Gastrocnemius medialis (tissue), 4 donors: ENCODE measurements at regions of chr11 and their contacts with region 1.

Region 1: DNA sequence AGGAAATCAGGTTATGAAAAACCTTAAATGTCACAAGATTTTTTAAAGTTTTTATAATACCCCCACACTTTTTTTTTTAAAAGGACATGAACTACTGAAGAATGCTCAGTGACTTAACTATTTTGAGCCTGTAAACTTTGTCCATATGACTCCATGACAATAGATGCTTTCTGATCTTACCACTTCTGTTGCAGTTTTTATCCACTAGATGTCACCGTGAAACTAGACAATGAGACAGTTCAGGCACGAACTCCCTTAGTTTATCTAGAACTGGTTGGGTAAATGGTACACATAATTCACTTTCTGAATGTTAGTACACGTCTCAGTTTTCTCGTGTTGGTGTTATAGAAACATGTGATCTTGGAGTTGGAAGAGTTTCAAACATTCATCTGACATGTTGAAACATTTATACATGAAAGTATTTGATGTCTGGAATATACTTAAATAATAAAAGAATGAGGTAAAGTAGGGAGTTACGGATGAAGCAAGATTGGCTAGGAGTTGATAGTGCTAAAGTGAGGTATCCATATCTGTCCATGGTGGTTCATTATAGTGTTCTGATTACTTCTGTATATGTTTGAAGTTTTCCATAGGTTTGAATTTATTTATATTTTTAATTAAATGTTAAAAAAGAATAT is 8.1 kb downstream of the CCDC15 start:
- DNase-seq: no peak
- ATAC-seq: peak; percentile 75 to 90
- H3K4me3 ChIP-seq: no peak overlapping the region
- H3K27ac ChIP-seq: no peak overlapping the region
- H3K4me1 ChIP-seq: no peaks in the 10 kb centered on the region
- H3K27me3 ChIP-seq: no peaks in the 10 kb centered on the region
- CTCF ChIP-seq: peak in 4 of 5 experiments; percentile 58 to 71 (median 60)
- POLR2A ChIP-seq: no peak

Region 2: GRCh38 chr11:124837491-124837856 is 124.6 kb before region 1 on chr11:
- in situ Hi-C with region 1: no loop called
- intact Hi-C with region 1: no loop called
- DNase-seq: no peak
- ATAC-seq: peak in 1 of 2 donors; percentile 52
- H3K4me3 ChIP-seq: no peak overlapping the region
- H3K27ac ChIP-seq: no peak overlapping the region
- H3K4me1 ChIP-seq: peaks cover 9 to 16% of the 10 kb centered on the region in 2 donors
- H3K27me3 ChIP-seq: peaks cover 44 to 49% (median 44%) of the 10 kb centered on the region in 3 donors
- CTCF ChIP-seq: no peak
- POLR2A ChIP-seq: no peak

Region 3: GRCh38 chr11:124946735-124947141 is 15.4 kb before region 1 on chr11:
- in situ Hi-C with region 1: no loop called
- intact Hi-C with region 1: no loop called
- DNase-seq: no peak
- ATAC-seq: no peak
- H3K4me3 ChIP-seq: no peak overlapping the region
- H3K27ac ChIP-seq: no peak overlapping the region
- H3K4me1 ChIP-seq: no peaks in the 10 kb centered on the region
- H3K27me3 ChIP-seq: no peaks in the 10 kb centered on the region
- CTCF ChIP-seq: no peak
- POLR2A ChIP-seq: no peak

Region 4: GRCh38 chr11:125141686-125142535 is 179.8 kb after region 1 on chr11:
- in situ Hi-C with region 1: loop called in 3 of 4 experiments (anchors 10 to 25 kb)
- intact Hi-C with region 1: loop called (anchors 2 kb)
- DNase-seq: no peak
- ATAC-seq: peak; percentile 9 to 83
- H3K4me3 ChIP-seq: no peak overlapping the region
- H3K27ac ChIP-seq: no peak overlapping the region
- H3K4me1 ChIP-seq: peaks cover 0 to 4% of the 10 kb centered on the region in 2 donors
- H3K27me3 ChIP-seq: peaks cover 0 to 8% (median 6%) of the 10 kb centered on the region in 3 donors
- CTCF ChIP-seq: peak; percentile 84 to 95 (median 88)
- POLR2A ChIP-seq: no peak

Region 5: GRCh38 chr11:125224391-125225010 is 262.4 kb after region 1 on chr11:
- in situ Hi-C with region 1: no loop called
- intact Hi-C with region 1: no loop called
- DNase-seq: no peak
- ATAC-seq: no peak
- H3K4me3 ChIP-seq: no peak overlapping the region
- H3K27ac ChIP-seq: peak overlapping the region; percentile 56 to 75 (median 70)
- H3K4me1 ChIP-seq: peaks cover 40 to 46% of the 10 kb centered on the region in 2 donors
- H3K27me3 ChIP-seq: no peaks in the 10 kb centered on the region
- CTCF ChIP-seq: peak in 2 of 5 experiments; percentile 11 to 16
- POLR2A ChIP-seq: no peak

Region 6: DNA sequence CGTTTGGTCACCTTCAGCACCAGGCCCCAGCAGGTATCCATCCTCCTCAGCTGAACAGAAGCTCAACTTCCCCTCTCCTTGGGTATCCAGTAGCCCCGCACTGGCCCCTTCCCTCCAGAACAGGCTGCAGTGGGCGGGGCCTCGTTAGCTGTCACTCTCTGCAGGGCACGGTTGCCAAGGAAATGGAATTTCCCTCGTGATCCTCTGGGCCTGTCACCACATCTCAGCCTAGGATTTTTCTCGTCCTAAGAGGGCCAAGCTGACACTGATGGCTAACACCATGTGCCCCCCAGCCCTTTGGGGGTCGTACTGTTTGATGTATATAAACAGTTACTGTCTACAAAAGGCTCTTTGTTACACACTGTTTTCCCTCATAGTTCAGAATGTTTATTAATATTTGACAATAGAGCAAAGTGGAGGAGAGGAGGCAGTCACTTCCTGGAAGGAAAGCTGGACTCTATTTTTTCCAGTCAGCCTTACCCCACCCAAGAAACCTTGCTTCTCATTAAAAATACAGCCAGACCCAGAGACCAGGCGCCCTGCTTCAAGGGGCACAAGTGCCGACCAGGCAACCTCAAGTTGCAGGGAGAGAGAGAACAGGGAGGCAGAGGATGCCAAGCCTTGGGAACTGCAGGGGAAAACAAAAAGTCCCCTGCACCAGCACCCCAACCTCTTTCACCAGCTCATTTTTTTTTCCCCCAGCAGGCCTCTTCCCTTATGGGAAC is 489.5 kb after region 1 on chr11:
- in situ Hi-C with region 1: no loop called
- intact Hi-C with region 1: loop called (anchors 5 kb)
- DNase-seq: no peak
- ATAC-seq: no peak
- H3K4me3 ChIP-seq: no peak overlapping the region
- H3K27ac ChIP-seq: no peak overlapping the region
- H3K4me1 ChIP-seq: no peaks in the 10 kb centered on the region
- H3K27me3 ChIP-seq: no peaks in the 10 kb centered on the region
- CTCF ChIP-seq: no peak
- POLR2A ChIP-seq: no peak